Posterior cingulate gyrus (tissue), 11 donors: ENCODE measurements at regions of chr10 and their contacts with region 1.

Region 1: DNA sequence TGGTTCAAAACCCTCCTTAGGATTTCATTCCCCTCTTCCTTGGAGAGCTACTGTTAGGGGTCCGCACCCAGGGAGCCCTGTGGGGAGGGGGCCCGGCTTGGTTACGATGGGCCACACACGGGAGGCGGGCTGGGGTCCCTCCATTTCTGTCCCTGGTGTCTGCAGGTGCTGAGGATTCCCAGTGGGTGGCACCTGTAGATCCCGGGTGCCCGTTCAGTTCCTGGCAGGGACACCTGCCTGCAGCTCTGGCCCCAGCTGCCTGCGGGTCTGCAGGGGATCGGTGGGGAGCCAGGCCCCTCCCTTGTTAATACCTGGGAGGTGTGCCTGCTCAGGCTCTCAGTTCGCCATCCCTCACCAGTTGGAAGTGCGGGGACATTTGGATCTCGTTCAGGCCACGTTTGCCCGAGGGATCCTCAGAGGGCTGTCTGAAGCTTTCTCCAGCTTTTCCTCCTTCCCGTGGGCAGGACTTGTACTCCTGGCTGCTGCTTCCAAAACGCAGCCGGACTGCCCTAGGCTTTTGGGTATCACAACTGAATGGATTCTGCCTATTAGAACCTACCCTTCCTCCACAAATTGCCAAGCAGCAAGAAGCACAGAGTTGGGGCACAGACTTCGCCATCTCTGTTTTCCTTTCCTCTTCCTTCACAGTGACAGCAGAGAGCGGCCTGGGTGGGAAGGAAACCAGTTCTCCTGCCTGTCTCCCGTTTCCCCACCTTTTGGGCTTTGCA is 22.3 kb upstream of the IL15RA start:
- DNase-seq: no peak

Region 2: GRCh38 chr10:6023661-6024333 is 24.2 kb after region 1 on chr10:
- intact Hi-C with region 1: loop called (anchors 2 kb)
- DNase-seq: no peak